Activated CD4-positive, alpha-beta T cell treated with anti-CD3 and anti-CD28 coated beads, Interleukin-2, amount 10 ng/mL, durations not matched to agents 7 days and 5 days (primary cell): ENCODE measurements at regions of chr16 and their contacts with region 1.

Region 1: GRCh38 chr16:11196286-11196828 is 59.6 kb downstream of the SOCS1 start:
- DNase-seq: no peak
- H3K4me3 Mint-ChIP-seq: no peak overlapping the region
- H3K27ac Mint-ChIP-seq: peak overlapping the region; percentile 66
- H3K4me1 Mint-ChIP-seq: peaks cover 71% of the 10 kb centered on the region
- H3K27me3 Mint-ChIP-seq: no peaks in the 10 kb centered on the region

Region 2: GRCh38 chr16:11181899-11182279 is 14.5 kb before region 1 on chr16:
- CTCF ChIA-PET with region 1: interaction called, 16 read pairs
- POLR2A ChIA-PET with region 1: interaction called, 4 read pairs
- DNase-seq: no peak
- H3K4me3 Mint-ChIP-seq: no peak overlapping the region
- H3K27ac Mint-ChIP-seq: peak overlapping the region; percentile 57
- H3K4me1 Mint-ChIP-seq: peaks cover 56% of the 10 kb centered on the region
- H3K27me3 Mint-ChIP-seq: no peaks in the 10 kb centered on the region

Region 3: GRCh38 chr16:11208916-11209665 is 12.7 kb after region 1 on chr16:
- CTCF ChIA-PET with region 1: interaction called, 11 read pairs
- POLR2A ChIA-PET with region 1: no interaction called
- DNase-seq: no peak
- H3K4me3 Mint-ChIP-seq: no peak overlapping the region
- H3K27ac Mint-ChIP-seq: no peak overlapping the region
- H3K4me1 Mint-ChIP-seq: peaks cover 28% of the 10 kb centered on the region
- H3K27me3 Mint-ChIP-seq: no peaks in the 10 kb centered on the region